H1 (cell line): ENCODE measurements at regions of chr10 and their contacts with region 1.

Region 1: GRCh38 chr10:97400665-97401454 is at the start of gene RRP12:
- DNase-seq: peak; percentile 82 to 84
- H3K4me3 ChIP-seq: peak within 1 kb of the TSS; percentile 87 to 98 (median 88)
- H3K27ac ChIP-seq: peak within 1 kb of the TSS; percentile 72
- H3K4me1 ChIP-seq: peaks cover 0 to 7% (median 5%) of the 10 kb centered on the region in 4 experiments; a peak in 4 of 7 replicates
- H3K27me3 ChIP-seq: no peaks in the 10 kb centered on the region
- CTCF ChIP-seq: peak in 1 of 3 experiments; percentile 7; a peak in 1 of 4 replicates
- EP300 ChIP-seq: no peak
- POLR2A ChIP-seq: peak in 1 of 2 experiments; percentile 82; a peak in 2 of 3 replicates
- RAD21 ChIP-seq: no peak
- total RNA-seq, gene RRP12: 65.8 and 71.9 TPM in 2 replicates

Region 2: GRCh38 chr10:97307866-97308780 is 92.7 kb before region 1 on chr10:
- CTCF ChIA-PET with region 1: no interaction called
- POLR2A ChIA-PET with region 1: no interaction called
- DNase-seq: no peak
- H3K4me3 ChIP-seq: no peak overlapping the region
- H3K27ac ChIP-seq: no peak overlapping the region
- H3K4me1 ChIP-seq: no peaks in the 10 kb centered on the region
- H3K27me3 ChIP-seq: no peaks in the 10 kb centered on the region; a peak in 1 of 7 replicates
- CTCF ChIP-seq: no peak
- EP300 ChIP-seq: no peak
- POLR2A ChIP-seq: no peak
- RAD21 ChIP-seq: no peak

Region 3: GRCh38 chr10:97383159-97383558 is 17.7 kb before region 1 on chr10:
- CTCF ChIA-PET with region 1: no interaction called
- POLR2A ChIA-PET with region 1: interaction called, 10 read pairs
- DNase-seq: no peak
- H3K4me3 ChIP-seq: no peak overlapping the region
- H3K27ac ChIP-seq: no peak overlapping the region
- H3K4me1 ChIP-seq: no peaks in the 10 kb centered on the region
- H3K27me3 ChIP-seq: no peaks in the 10 kb centered on the region
- CTCF ChIP-seq: no peak
- EP300 ChIP-seq: no peak
- POLR2A ChIP-seq: no peak
- RAD21 ChIP-seq: no peak

Region 4: DNA sequence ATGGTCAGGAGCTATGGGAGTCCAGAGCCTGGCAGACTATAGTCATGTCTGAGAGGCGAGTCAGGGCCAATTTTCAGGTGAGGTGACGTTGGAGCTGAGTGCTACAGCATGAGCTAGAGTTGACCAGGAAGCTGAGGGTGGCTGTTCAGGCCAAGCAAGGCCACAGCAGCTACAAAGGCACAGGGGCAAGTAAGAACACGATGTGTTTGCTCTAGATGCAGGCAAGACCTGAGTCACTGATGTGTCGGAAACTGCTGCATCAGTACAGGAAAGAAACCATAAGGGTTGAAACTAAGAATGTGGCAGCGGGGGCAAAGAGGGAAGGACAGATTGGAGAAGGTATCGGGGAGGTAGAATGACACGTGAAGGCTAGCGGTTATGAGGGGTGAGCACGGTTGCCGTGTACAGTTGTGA is 12.0 kb after region 1 on chr10:
- CTCF ChIA-PET with region 1: interaction called, 128 read pairs
- POLR2A ChIA-PET with region 1: interaction called, 21 read pairs
- DNase-seq: no peak
- H3K4me3 ChIP-seq: no peak overlapping the region
- H3K27ac ChIP-seq: no peak overlapping the region
- H3K4me1 ChIP-seq: no peaks in the 10 kb centered on the region
- H3K27me3 ChIP-seq: no peaks in the 10 kb centered on the region
- CTCF ChIP-seq: no peak
- EP300 ChIP-seq: no peak
- POLR2A ChIP-seq: no peak
- RAD21 ChIP-seq: no peak

Region 5: DNA sequence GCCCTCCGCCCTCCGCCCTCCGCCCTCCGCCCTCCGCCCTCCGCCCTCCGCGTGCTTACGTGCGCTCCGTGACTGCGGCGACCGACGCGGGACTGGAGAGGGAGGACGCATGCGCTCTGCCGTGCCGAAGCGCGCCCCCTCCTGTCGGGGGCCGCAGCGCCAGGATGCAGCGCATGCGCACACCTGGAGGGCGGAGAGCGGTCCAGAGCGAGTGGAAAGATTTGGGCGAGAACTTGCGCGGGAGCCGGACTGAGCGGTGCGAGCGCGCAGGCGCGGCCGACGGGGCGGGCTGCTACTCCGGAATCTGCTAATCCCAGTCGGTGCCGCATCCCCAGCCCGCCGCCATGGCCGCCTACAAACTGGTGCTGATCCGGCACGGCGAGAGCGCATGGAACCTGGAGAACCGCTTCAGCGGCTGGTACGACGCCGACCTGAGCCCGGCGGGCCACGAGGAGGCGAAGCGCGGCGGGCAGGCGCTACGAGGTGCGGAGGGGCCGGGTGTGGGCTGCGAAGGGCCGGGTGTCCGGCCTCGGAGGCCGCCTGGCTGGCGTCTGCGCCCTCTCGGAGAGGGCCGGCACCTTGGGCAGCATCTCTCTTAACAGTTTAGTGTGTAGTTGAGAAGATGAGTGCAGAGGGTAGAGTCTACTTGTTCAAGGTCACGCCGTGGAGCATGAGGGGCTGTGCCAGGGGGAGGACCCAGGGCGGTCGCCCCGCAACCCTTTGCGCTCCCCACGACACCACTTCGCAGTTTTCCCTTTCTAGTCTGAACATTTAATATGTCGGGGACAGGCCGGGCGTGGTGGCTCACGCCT is 25.3 kb after region 1 on chr10 and contains the start of gene PGAM1:
- CTCF ChIA-PET with region 1: interaction called, 128 read pairs
- POLR2A ChIA-PET with region 1: interaction called, 31 read pairs
- DNase-seq: peak; percentile 94 to 96
- H3K4me3 ChIP-seq: peak within 1 kb of the TSS; percentile 69 to 100 (median 95)
- H3K27ac ChIP-seq: peak within 1 kb of the TSS; percentile 87
- H3K4me1 ChIP-seq: peaks cover 3 to 6% (median 4%) of the 10 kb centered on the region in 4 experiments; a peak in 6 of 7 replicates
- H3K27me3 ChIP-seq: no peaks in the 10 kb centered on the region
- CTCF ChIP-seq: peak; percentile 72 to 89 (median 85)
- EP300 ChIP-seq: no peak
- POLR2A ChIP-seq: peak; percentile 46 to 75
- RAD21 ChIP-seq: peak in 1 of 2 experiments; percentile 12; a peak in 1 of 4 replicates
- total RNA-seq, gene PGAM1: 799 and 819 TPM in 2 replicates

Region 6: GRCh38 chr10:97434055-97434454 is 33.2 kb after region 1 on chr10:
- CTCF ChIA-PET with region 1: interaction called, 6 read pairs
- POLR2A ChIA-PET with region 1: interaction called, 31 read pairs
- DNase-seq: no peak
- H3K4me3 ChIP-seq: no peak overlapping the region
- H3K27ac ChIP-seq: no peak overlapping the region
- H3K4me1 ChIP-seq: no peaks in the 10 kb centered on the region
- H3K27me3 ChIP-seq: no peaks in the 10 kb centered on the region
- CTCF ChIP-seq: no peak
- EP300 ChIP-seq: no peak
- POLR2A ChIP-seq: no peak
- RAD21 ChIP-seq: no peak